Activated naive CD4-positive, alpha-beta T cell treated with anti-CD3 and anti-CD28 coated beads, Interleukin-2, amount 10 ng/mL, durations not matched to agents 7 days and 5 days (primary cell): ENCODE measurements at regions of chr1 and their contacts with region 1.

Region 1: GRCh38 chr1:119662034-119662437 is 14.0 kb upstream of the ZNF697 start:
- DNase-seq: no peak
- H3K4me3 Mint-ChIP-seq: no peak overlapping the region
- H3K27ac Mint-ChIP-seq: no peak overlapping the region
- H3K4me1 Mint-ChIP-seq: peaks cover 8% of the 10 kb centered on the region
- H3K27me3 Mint-ChIP-seq: peaks cover 46% of the 10 kb centered on the region

Region 2: GRCh38 chr1:119613769-119614720 is 48.0 kb before region 1 on chr1:
- CTCF ChIA-PET with region 1: interaction called, 26 read pairs
- DNase-seq: peak; percentile 82
- H3K4me3 Mint-ChIP-seq: no peak overlapping the region
- H3K27ac Mint-ChIP-seq: no peak overlapping the region
- H3K4me1 Mint-ChIP-seq: no peaks in the 10 kb centered on the region
- H3K27me3 Mint-ChIP-seq: peaks cover 18% of the 10 kb centered on the region